Cardiac septum (tissue), 1 donor: ENCODE measurements at regions of chr3 and their contacts with region 1.

Region 1: GRCh38 chr3:188978421-188979171 is 193.2 kb upstream of the TPRG1 start:
- DNase-seq: no peak

Region 2: DNA sequence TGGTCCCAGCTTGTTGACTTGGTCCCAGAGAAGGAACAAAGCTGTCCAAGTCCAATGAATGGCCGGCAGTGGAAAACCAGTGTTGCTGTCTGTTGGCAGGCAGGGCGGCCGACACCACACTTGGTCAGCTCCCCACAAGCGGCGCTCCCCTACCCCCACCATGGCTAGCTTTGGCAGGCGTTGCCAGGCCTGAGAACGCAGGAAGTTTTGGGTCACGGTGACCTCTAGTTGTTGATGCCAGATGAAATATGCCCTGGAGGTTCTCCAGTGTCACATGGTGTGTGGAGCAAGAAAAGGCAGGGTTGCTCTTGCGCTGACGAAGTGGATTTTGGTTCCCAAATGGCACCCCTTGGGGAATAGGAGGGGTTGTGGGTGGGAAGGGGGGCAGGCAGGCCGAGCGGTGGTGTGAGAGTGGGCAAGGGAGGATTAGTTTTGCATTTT is 120.5 kb after region 1 on chr3:
- intact Hi-C with region 1: loop called (anchors 2 kb)
- DNase-seq: peak; percentile 85

Region 3: DNA sequence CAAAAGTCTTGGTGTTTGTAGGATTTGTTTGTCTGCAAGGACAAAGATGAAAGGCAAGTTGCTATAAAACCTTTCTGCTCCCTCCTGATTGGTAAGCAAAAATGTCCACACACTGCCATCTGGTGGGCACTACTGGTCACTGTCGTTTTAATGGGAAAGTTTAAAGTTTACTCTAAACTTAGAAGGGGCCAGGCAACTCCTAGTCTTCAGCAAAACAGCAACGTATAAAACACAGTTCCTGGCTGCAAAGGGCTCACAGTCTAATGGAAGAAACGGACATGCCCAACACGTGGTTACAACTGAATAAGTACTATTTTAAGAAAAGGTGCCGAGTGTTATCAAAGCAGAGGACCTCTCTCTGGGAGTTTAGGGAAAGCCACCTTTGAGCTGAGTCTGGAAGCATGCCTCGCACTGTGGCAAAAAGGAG is 169.5 kb after region 1 on chr3:
- intact Hi-C with region 1: loop called (anchors 5 kb)
- DNase-seq: peak; percentile 77